CD8-positive, alpha-beta T cell (primary cell): ENCODE measurements at regions of chr14 and their contacts with region 1.

Region 1: DNA sequence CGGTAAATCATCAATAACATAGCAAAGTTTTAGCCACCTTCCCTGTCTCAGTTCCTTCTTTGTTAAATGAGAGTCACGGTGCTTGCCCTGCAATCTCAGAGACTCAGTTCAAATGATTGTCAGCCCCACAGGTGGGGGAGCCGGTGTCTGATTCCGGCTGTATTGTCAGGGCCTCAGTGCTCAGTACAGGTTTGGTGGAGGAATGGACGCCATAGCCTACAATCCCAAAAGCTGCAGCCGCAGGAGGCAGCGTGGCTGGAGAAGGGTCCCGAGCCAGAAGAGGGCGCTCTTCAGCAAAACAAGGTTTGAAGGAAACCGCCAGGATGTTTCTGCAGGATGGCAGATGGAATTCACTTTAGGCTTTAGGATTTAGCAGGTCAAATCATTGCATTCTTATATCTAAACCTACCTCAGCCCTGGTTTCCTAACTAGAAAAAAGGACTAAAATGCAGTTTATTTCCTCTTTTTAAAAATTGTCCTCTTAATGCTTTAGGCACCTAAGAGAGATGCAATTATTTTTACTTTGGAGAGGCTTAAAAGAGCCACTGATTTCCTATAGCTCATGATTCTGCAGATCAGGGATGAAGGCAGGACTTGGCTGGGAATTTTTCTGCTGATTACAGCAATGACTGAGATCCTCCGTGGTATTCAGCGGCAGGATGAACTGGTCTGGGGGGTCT is 29.2 kb downstream of the FOS start:
- DNase-seq: peak; percentile 40 to 82 (median 76)
- ATAC-seq: peak; percentile 64
- H3K4me3 ChIP-seq: no peak overlapping the region
- H3K4me3 Mint-ChIP-seq: no peak overlapping the region
- H3K27ac ChIP-seq: no peak overlapping the region
- H3K27ac Mint-ChIP-seq: no peak overlapping the region
- H3K4me1 ChIP-seq: peaks cover 3% of the 10 kb centered on the region
- H3K4me1 Mint-ChIP-seq: peaks cover 5% of the 10 kb centered on the region
- H3K27me3 ChIP-seq: no peaks in the 10 kb centered on the region
- H3K27me3 Mint-ChIP-seq: peaks cover 2% of the 10 kb centered on the region
- CTCF ChIP-seq: peak; percentile 83

Region 2: GRCh38 chr14:74860906-74861733 is 446.7 kb before region 1 on chr14:
- CTCF ChIA-PET with region 1: interaction called, 6 read pairs
- POLR2A ChIA-PET with region 1: no interaction called
- intact Hi-C with region 1: loop called in 1 of 2 experiments (anchors 5 kb)
- DNase-seq: peak; percentile 85 to 99 (median 90)
- ATAC-seq: peak; percentile 84
- H3K4me3 ChIP-seq: no peak overlapping the region
- H3K4me3 Mint-ChIP-seq: no peak overlapping the region
- H3K27ac ChIP-seq: no peak overlapping the region
- H3K27ac Mint-ChIP-seq: no peak overlapping the region
- H3K4me1 ChIP-seq: peaks cover 4% of the 10 kb centered on the region
- H3K4me1 Mint-ChIP-seq: peaks cover 7% of the 10 kb centered on the region
- H3K27me3 ChIP-seq: no peaks in the 10 kb centered on the region
- H3K27me3 Mint-ChIP-seq: no peaks in the 10 kb centered on the region
- CTCF ChIP-seq: peak; percentile 85

Region 3: DNA sequence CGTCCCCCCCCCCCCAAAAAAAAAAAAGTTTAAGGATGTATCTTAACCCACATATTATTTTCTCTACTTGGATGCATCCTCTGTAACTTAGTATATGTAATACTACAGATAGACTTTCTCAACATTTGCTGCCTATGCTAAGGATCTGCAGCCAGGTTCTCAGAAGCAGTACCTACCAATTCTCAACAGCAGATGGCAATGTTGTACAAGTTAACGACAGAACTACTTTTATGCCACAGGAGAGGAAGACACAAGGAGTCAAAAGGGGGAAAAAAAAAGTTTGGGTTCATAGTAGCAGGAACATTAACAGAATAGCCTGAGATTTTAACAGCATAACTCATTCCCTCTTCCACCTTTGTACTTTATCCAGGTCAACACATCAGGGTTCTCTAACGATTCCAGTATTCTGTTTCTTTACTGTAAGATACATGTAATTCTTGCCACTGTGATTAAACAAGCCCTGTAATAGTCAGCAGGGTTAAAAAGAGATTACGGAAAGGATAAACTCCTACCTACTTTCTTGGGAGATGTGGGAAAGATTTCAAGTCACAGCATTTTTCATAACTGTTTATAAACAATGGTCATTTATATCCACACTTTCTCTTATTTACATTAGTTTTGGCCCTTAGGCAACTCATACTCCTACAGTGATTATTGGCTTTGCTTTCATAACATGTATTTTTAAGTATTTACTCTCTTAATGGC is 175.3 kb before region 1 on chr14:
- CTCF ChIA-PET with region 1: interaction called, 473 read pairs
- POLR2A ChIA-PET with region 1: no interaction called
- intact Hi-C with region 1: loop called (anchors 1 kb)
- DNase-seq: peak in 6 of 9 experiments; percentile 28 to 86 (median 54)
- ATAC-seq: peak; percentile 91
- H3K4me3 ChIP-seq: no peak overlapping the region
- H3K4me3 Mint-ChIP-seq: no peak overlapping the region
- H3K27ac ChIP-seq: no peak overlapping the region
- H3K27ac Mint-ChIP-seq: peak overlapping the region; percentile 12
- H3K4me1 ChIP-seq: peaks cover 3% of the 10 kb centered on the region
- H3K4me1 Mint-ChIP-seq: peaks cover 18% of the 10 kb centered on the region
- H3K27me3 ChIP-seq: no peaks in the 10 kb centered on the region
- H3K27me3 Mint-ChIP-seq: no peaks in the 10 kb centered on the region
- CTCF ChIP-seq: peak; percentile 79

Region 4: DNA sequence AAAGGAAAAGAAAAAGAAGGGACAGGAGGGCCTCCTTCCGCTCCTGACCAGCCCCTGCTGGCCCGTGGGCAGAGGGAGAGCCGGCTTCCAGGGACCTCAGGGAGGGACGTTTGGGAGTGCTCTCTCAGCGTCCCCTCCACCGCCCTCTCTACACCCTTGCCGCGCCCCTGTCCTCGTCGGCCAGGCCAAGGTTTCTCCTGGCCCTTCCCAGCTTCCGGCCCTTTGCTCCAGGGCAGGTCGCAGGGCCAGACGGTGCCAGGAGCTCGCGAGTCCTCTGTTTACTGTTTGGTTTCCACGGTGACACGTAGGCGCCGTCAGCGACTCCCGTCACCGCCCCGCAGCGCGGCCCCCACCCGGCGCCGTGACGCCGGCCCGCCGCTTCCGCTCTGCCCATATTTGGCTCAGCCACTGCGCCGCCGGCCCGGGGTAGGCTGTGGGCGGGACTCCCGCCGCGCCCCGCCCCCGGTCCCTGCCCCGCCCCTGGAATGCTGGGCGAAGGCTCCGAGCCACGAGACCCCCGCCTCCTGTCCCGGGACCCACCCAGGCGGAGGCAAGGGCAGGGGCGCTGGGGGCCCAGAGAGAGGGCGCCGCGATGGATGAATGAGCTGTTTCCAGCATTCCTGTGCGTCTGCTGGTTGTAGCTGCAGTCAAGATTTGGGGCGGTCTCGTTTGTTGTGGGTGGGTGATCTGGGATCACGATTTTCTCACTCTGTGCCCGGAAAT is 13.8 kb before region 1 on chr14:
- CTCF ChIA-PET with region 1: interaction called, 15 read pairs
- POLR2A ChIA-PET with region 1: no interaction called
- intact Hi-C with region 1: no loop called
- DNase-seq: peak; percentile 90 to 99 (median 94)
- ATAC-seq: peak; percentile 87
- H3K4me3 ChIP-seq: peak overlapping the region; percentile 31 to 62
- H3K4me3 Mint-ChIP-seq: peak overlapping the region; percentile 88
- H3K27ac ChIP-seq: peak overlapping the region; percentile 95 to 99
- H3K27ac Mint-ChIP-seq: peak overlapping the region; percentile 93
- H3K4me1 ChIP-seq: peaks cover 23% of the 10 kb centered on the region
- H3K4me1 Mint-ChIP-seq: peaks cover 23% of the 10 kb centered on the region
- H3K27me3 ChIP-seq: peaks cover 0 to 2% of the 10 kb centered on the region in 2 experiments
- H3K27me3 Mint-ChIP-seq: no peaks in the 10 kb centered on the region
- CTCF ChIP-seq: no peak

Region 5: GRCh38 chr14:75350505-75351060 is 42.7 kb after region 1 on chr14:
- CTCF ChIA-PET with region 1: no interaction called
- POLR2A ChIA-PET with region 1: no interaction called
- intact Hi-C with region 1: no loop called
- DNase-seq: no peak
- ATAC-seq: no peak
- H3K4me3 ChIP-seq: no peak overlapping the region
- H3K4me3 Mint-ChIP-seq: no peak overlapping the region
- H3K27ac ChIP-seq: no peak overlapping the region
- H3K27ac Mint-ChIP-seq: no peak overlapping the region
- H3K4me1 ChIP-seq: no peaks in the 10 kb centered on the region
- H3K4me1 Mint-ChIP-seq: no peaks in the 10 kb centered on the region
- H3K27me3 ChIP-seq: no peaks in the 10 kb centered on the region
- H3K27me3 Mint-ChIP-seq: peaks cover 2% of the 10 kb centered on the region
- CTCF ChIP-seq: no peak

Region 6: GRCh38 chr14:75452900-75453747 is 145.3 kb after region 1 on chr14:
- CTCF ChIA-PET with region 1: interaction called, 22 read pairs
- POLR2A ChIA-PET with region 1: no interaction called
- intact Hi-C with region 1: loop called in 1 of 2 experiments (anchors 1 kb)
- DNase-seq: no peak
- ATAC-seq: no peak
- H3K4me3 ChIP-seq: no peak overlapping the region
- H3K4me3 Mint-ChIP-seq: no peak overlapping the region
- H3K27ac ChIP-seq: no peak overlapping the region
- H3K27ac Mint-ChIP-seq: no peak overlapping the region
- H3K4me1 ChIP-seq: no peaks in the 10 kb centered on the region
- H3K4me1 Mint-ChIP-seq: no peaks in the 10 kb centered on the region
- H3K27me3 ChIP-seq: no peaks in the 10 kb centered on the region
- H3K27me3 Mint-ChIP-seq: peaks cover 5% of the 10 kb centered on the region
- CTCF ChIP-seq: no peak

Region 7: GRCh38 chr14:75554487-75554886 is 246.6 kb after region 1 on chr14:
- CTCF ChIA-PET with region 1: no interaction called
- POLR2A ChIA-PET with region 1: no interaction called
- intact Hi-C with region 1: loop called in 1 of 2 experiments (anchors 5 kb)
- DNase-seq: no peak
- ATAC-seq: no peak
- H3K4me3 ChIP-seq: no peak overlapping the region
- H3K4me3 Mint-ChIP-seq: no peak overlapping the region
- H3K27ac ChIP-seq: no peak overlapping the region
- H3K27ac Mint-ChIP-seq: no peak overlapping the region
- H3K4me1 ChIP-seq: no peaks in the 10 kb centered on the region
- H3K4me1 Mint-ChIP-seq: peaks cover 10% of the 10 kb centered on the region
- H3K27me3 ChIP-seq: no peaks in the 10 kb centered on the region
- H3K27me3 Mint-ChIP-seq: no peaks in the 10 kb centered on the region
- CTCF ChIP-seq: no peak

Region 8: GRCh38 chr14:75654127-75654732 is 346.4 kb after region 1 on chr14:
- CTCF ChIA-PET with region 1: interaction called, 5 read pairs
- POLR2A ChIA-PET with region 1: no interaction called
- intact Hi-C with region 1: loop called (anchors 2 to 5 kb)
- DNase-seq: peak; percentile 59 to 86 (median 78)
- ATAC-seq: peak; percentile 99
- H3K4me3 ChIP-seq: no peak overlapping the region
- H3K4me3 Mint-ChIP-seq: no peak overlapping the region
- H3K27ac ChIP-seq: no peak overlapping the region
- H3K27ac Mint-ChIP-seq: no peak overlapping the region
- H3K4me1 ChIP-seq: no peaks in the 10 kb centered on the region
- H3K4me1 Mint-ChIP-seq: peaks cover 14% of the 10 kb centered on the region
- H3K27me3 ChIP-seq: no peaks in the 10 kb centered on the region
- H3K27me3 Mint-ChIP-seq: no peaks in the 10 kb centered on the region
- CTCF ChIP-seq: peak; percentile 92